ENCODE measurements at regions of chr6 and their contacts with region 1.

Region 1: DNA sequence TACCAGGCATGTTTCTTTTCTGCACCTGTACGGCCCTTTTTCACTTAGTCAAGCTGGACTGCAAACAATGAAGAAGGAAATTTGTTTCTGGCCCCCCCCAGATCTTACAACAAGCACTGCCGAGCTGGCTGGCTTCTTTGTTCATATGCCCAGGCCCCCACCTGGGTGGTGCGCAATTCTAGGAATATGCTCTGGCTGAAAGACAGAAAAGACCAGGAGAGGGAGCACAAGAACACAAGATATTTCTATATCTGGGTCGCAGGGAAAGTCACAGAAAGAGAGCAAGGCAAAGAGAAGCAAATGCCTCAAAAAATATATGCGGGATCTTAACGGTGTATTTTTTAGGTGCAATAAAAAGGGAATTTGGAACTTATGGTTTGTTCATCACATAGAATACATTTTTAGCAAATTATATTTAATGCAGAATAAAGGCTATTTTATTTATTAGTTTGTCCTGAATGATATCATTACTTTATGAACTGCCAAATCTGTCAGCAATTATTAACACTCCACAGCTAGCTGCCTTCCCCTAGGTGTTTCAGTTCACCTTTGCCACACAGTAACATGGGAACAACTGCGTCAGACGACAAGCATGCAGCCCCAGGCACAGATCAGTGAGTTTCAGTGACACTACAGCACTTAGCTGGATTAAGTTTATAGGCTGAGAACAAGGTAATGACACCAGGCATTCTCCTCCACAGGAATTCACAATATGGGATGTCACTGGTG is 76.5 kb downstream of the GJA10 start:
- DNase-seq: no peak

Region 2: DNA sequence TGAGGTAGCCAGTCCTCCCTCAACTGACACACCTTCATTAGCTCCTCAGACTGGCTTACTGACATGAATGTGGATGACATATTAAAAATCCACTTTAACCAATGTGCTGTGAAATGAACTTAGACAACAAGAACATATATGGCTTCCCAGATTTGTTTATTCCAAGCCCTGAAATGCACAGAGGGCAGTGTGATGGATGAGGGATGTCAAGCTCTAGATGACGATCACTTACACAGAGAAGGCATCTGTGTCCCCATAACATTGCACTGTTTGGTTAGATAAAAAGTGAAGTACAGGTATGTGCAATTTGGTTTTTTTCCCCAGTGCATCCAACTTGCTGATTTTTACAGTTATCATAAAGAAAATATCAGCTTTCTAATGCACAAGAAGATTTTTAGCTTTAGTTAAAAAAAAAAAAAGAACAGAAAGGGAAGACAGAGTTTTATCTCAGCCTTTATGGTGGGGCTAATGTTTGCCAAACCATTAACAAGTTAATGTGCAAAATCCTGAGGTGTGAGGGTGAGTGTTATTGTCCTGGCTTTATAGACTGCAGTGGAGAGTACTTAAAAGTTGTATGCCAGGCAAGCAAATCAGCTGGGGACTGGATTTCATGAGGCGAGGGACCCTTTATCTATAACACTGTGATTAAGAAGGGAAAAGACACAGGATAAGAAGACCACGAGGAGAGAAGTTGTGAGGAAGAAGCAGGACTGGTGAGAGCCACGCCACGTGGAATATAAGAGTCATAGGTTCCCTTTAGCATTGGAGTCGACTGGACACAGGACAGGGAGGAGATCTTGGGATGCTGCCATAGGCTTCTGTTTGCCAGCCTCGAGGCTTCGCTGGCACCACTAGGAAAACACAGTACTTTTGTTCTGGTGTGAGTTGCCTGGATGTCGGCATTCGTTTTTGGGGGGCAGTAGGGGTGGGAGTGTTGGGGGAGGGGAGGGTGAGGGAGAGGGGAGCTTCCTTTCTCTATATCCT is 415.9 kb after region 1 on chr6:
- intact Hi-C with region 1: loop called (anchors 5 kb)
- DNase-seq: no peak